B cell (primary cell): ENCODE measurements at regions of chr16 and their contacts with region 1.

Region 1: GRCh38 chr16:2155091-2156021 is at the start of gene TRAF7:
- DNase-seq: peak; percentile 100
- ATAC-seq: peak; percentile 93
- H3K4me3 ChIP-seq: peak within 1 kb of the TSS; percentile 71 to 100 (median 90)
- H3K4me3 Mint-ChIP-seq: peak within 1 kb of the TSS; percentile 93
- H3K27ac ChIP-seq: peak within 1 kb of the TSS; percentile 66 to 84
- H3K27ac Mint-ChIP-seq: peak within 1 kb of the TSS; percentile 81
- H3K4me1 ChIP-seq: peaks cover 43 to 76% of the 10 kb centered on the region in 2 donors
- H3K4me1 Mint-ChIP-seq: peaks cover 70% of the 10 kb centered on the region
- H3K27me3 ChIP-seq: no peaks in the 10 kb centered on the region
- H3K27me3 Mint-ChIP-seq: no peaks in the 10 kb centered on the region
- CTCF ChIP-seq: no peak
- total RNA-seq, gene TRAF7: 42.3 and 50.9 TPM in 2 replicates

Region 2: DNA sequence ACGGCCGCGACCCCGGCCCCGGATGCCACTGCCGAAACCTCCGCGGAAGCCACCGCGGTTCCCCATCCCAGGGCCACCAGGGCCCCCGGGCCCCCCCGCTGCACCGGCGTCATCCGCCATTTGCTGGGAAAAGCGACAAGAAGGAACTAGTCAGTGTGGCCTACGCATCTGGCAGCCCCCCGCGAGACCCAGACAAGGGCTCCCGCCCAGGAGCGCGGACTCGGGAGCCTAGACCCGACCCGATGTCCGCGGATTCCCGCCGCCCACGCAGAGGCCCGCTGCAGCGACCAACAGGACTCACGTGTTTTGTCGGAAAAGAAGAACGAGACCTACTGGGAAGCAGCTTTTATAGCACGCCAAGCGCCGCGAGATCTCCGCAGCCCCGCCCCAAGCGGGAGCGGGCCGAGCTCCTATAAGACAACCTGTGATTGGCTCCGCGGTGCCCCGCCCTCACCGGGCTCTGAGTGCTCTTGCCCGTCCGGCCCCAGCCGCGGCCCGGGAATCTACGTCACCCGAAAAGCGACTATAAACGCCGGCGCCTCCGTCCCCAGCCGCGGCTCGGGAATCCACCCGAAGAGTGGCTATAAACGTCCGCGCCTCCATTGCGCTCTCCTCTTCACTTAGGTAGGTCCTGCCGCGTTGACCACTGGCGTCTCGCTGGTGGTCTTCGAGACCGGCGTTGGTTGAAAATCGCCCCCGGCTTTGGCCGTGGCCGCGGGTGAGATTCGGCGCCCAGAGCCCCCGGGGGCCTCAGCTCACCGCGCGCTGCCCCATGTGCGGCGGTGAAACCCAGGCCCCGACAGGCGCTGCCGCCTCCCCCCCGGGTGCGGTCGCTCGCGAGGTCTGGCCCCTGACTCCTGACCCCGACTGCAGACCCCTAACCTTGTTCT is 190.6 kb before region 1 on chr16 and contains the start of gene RPS2:
- CTCF ChIA-PET with region 1: interaction called, 4 read pairs
- POLR2A ChIA-PET with region 1: interaction called, 10 read pairs
- intact Hi-C with region 1: loop called (anchors 1 kb)
- DNase-seq: peak; percentile 99
- ATAC-seq: peak; percentile 93
- H3K4me3 ChIP-seq: peak within 1 kb of the TSS; percentile 60 to 94 (median 76)
- H3K4me3 Mint-ChIP-seq: peak within 1 kb of the TSS; percentile 94
- H3K27ac ChIP-seq: peak within 1 kb of the TSS; percentile 83 to 100
- H3K27ac Mint-ChIP-seq: peak within 1 kb of the TSS; percentile 97
- H3K4me1 ChIP-seq: peaks cover 26 to 49% of the 10 kb centered on the region in 2 donors
- H3K4me1 Mint-ChIP-seq: peaks cover 42% of the 10 kb centered on the region
- H3K27me3 ChIP-seq: no peaks in the 10 kb centered on the region
- H3K27me3 Mint-ChIP-seq: no peaks in the 10 kb centered on the region
- CTCF ChIP-seq: no peak
- total RNA-seq, gene RPS2: 3,155 and 3,261 TPM in 2 replicates

Region 3: DNA sequence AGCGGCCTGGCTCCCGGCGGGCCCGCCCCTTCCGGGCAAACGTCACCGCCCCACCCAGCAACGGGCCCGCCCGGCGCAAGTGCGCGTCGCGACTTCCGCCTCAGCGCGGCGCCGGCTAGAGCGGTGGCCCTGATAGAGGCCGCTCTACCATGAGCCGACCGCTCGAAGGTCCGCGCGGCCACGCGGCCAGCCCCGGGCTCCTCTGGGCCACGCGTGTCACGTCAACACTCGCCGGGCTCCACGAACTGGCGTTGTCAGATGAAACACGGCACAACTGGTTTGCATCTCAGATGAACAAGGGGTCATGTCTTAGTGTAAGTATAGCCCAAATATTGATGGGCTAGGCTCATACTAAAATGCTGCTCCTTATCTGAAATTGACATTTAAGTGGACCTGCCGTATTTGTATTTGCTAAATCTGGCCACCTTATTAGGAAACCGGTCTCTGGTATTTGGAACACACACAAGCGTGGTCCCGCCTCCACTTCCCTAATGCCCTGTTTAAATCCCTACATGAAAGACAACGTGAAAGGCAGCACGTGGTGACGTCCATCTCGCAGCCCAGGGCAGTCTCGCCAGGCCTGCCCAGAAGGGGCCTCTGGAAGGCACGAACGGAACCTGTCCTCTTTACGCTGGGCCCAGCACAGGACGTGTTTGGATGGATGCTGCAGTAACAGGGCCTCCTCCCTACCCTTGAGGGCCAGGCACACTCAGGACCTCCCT is 145.4 kb before region 1 on chr16 and contains the start of gene ZNF598:
- CTCF ChIA-PET with region 1: interaction called, 8 read pairs
- POLR2A ChIA-PET with region 1: interaction called, 4 read pairs
- intact Hi-C with region 1: loop called (anchors 1 kb)
- DNase-seq: peak; percentile 90
- ATAC-seq: peak; percentile 97
- H3K4me3 ChIP-seq: peak within 1 kb of the TSS; percentile 61 to 87 (median 77)
- H3K4me3 Mint-ChIP-seq: peak within 1 kb of the TSS; percentile 95
- H3K27ac ChIP-seq: peak within 1 kb of the TSS; percentile 87 to 95
- H3K27ac Mint-ChIP-seq: peak within 1 kb of the TSS; percentile 95
- H3K4me1 ChIP-seq: peaks cover 35 to 44% of the 10 kb centered on the region in 2 donors
- H3K4me1 Mint-ChIP-seq: peaks cover 38% of the 10 kb centered on the region
- H3K27me3 ChIP-seq: no peaks in the 10 kb centered on the region
- H3K27me3 Mint-ChIP-seq: no peaks in the 10 kb centered on the region
- CTCF ChIP-seq: no peak
- total RNA-seq, gene ZNF598: 49.5 and 50.3 TPM in 2 replicates

Region 4: DNA sequence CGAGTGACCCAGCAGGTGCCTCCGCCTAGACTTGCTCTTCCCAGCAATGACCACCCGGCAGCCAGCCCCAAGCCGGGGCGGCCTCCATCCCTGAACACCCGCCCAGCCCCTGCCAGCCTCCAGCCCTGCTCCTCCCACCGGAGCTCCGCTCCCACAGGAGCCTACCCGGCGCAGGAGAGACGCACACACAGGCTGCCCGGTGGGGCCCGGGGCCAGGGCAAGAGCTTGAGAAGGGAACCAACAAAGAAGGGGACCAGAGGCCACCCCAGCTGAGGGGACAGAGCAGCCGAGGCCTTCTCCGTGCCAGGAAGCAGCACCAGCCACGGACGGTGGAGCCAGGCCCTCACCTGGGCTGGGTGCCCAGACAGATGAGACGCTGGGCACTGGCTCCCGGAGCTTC is 33.5 kb before region 1 on chr16:
- CTCF ChIA-PET with region 1: interaction called, 8 read pairs
- POLR2A ChIA-PET with region 1: no interaction called
- intact Hi-C with region 1: loop called (anchors 1 kb)
- DNase-seq: no peak
- ATAC-seq: no peak
- H3K4me3 ChIP-seq: no peak overlapping the region
- H3K4me3 Mint-ChIP-seq: no peak overlapping the region
- H3K27ac ChIP-seq: no peak overlapping the region
- H3K27ac Mint-ChIP-seq: no peak overlapping the region
- H3K4me1 ChIP-seq: peaks cover 0 to 3% of the 10 kb centered on the region in 2 donors
- H3K4me1 Mint-ChIP-seq: peaks cover 14% of the 10 kb centered on the region
- H3K27me3 ChIP-seq: no peaks in the 10 kb centered on the region
- H3K27me3 Mint-ChIP-seq: no peaks in the 10 kb centered on the region
- CTCF ChIP-seq: no peak

Region 5: DNA sequence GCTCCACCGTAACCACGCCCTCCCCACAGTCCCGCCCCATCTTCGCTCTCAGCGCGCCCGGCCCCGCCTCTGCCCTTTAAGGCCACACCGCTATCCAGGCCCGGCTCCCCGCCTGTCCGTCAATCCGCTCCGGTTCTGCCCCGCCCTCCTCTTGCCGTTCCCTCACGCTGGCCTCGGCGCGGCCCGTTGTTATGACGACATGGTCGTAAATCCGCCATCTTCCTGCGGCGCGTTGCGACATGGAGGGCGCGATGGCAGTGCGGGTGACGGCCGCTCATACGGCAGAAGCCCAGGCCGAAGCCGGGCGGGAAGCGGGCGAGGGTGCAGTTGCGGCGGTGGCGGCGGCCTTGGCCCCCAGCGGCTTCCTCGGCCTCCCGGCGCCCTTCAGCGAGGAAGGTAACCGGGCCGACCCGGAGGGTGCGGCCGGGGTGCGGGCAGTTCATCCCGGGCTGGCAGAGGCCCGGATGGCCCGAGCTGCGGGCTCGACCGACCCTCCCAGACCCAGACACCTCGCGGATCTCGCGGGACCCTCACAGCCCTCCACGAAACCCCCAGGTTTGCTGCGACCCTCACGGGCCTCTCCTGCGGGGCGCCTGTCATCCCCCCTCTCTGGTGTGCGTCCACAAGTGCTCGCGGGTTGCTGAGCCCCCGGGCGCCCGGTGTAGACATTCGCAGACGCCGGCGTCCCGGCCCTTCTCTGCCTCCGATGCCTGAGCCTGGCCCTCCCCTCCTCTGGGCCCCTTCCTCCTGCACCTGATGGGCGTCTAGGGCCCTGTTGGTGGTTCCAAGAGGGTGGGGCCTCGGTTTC is 68.2 kb after region 1 on chr16 and contains the start of gene E4F1:
- CTCF ChIA-PET with region 1: interaction called, 3 read pairs
- POLR2A ChIA-PET with region 1: no interaction called
- intact Hi-C with region 1: loop called (anchors 2 kb)
- DNase-seq: peak; percentile 100
- ATAC-seq: peak; percentile 99
- H3K4me3 ChIP-seq: peak within 1 kb of the TSS; percentile 51 to 92 (median 82)
- H3K4me3 Mint-ChIP-seq: peak within 1 kb of the TSS; percentile 86
- H3K27ac ChIP-seq: peak within 1 kb of the TSS; percentile 47 to 85
- H3K27ac Mint-ChIP-seq: peak within 1 kb of the TSS; percentile 86
- H3K4me1 ChIP-seq: peaks cover 6 to 16% of the 10 kb centered on the region in 2 donors
- H3K4me1 Mint-ChIP-seq: peaks cover 25% of the 10 kb centered on the region
- H3K27me3 ChIP-seq: no peaks in the 10 kb centered on the region
- H3K27me3 Mint-ChIP-seq: no peaks in the 10 kb centered on the region
- CTCF ChIP-seq: no peak
- total RNA-seq, gene E4F1: 41.8 and 43.0 TPM in 2 replicates

Region 6: DNA sequence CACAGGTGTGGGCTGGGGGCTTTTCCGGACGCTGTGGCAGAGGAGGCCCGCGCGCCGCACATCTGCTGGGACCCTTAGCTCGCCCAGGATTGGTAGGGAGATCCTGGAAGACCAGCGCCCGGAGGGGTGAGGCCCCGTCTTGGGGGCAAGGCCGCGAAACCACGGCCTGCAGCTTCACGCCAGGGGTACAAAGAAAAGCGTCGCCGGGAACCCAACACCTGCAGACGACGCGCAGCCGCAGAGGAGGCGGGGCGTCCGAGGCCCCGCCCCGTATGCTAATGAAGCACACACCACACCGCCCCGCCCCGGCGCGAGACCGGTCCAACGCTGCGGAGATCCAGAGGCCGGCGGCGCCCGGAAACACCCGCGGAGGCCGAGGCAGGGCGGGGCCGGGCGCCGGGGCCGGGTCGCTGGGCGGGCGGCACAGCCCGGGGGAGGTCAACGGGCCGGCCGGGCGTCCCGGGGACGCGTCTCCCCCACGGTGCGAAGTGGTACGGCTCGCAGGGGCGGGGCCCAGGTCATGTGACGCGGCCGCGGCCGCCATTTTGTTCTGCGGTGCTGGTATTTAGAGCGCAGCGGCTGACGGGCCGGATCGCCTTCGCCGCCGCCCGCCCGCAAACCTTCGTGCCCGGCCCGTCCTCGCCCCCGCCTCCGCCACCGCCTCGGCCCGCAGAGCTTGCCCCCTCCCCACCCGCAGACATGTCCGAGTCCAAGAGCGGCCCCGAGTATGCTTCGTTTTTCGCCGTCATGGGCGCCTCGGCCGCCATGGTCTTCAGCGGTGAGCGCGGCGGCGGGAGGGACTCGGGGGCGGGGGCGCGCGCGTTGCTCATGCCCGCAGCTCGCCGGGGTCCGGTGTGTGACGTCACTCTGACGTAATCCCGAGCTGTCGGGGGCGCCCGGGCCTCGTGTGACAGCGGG is 358.3 kb after region 1 on chr16 and contains the start of gene ATP6V0C:
- CTCF ChIA-PET with region 1: interaction called, 5 read pairs
- POLR2A ChIA-PET with region 1: interaction called, 3 read pairs
- intact Hi-C with region 1: loop called (anchors 1 kb)
- DNase-seq: peak; percentile 98
- ATAC-seq: peak; percentile 80
- H3K4me3 ChIP-seq: peak within 1 kb of the TSS; percentile 75 to 96 (median 82)
- H3K4me3 Mint-ChIP-seq: peak within 1 kb of the TSS; percentile 96
- H3K27ac ChIP-seq: peak within 1 kb of the TSS; percentile 94 to 99
- H3K27ac Mint-ChIP-seq: peak within 1 kb of the TSS; percentile 99
- H3K4me1 ChIP-seq: peaks cover 79 to 88% of the 10 kb centered on the region in 2 donors
- H3K4me1 Mint-ChIP-seq: peaks cover 80% of the 10 kb centered on the region
- H3K27me3 ChIP-seq: no peaks in the 10 kb centered on the region
- H3K27me3 Mint-ChIP-seq: no peaks in the 10 kb centered on the region
- CTCF ChIP-seq: no peak
- total RNA-seq, gene ATP6V0C: 106 and 118 TPM in 2 replicates